Activated naive CD4-positive, alpha-beta T cell treated with anti-CD3 and anti-CD28 coated beads, Interleukin-2, amount 10 ng/mL, durations not matched to agents 7 days and 5 days (primary cell): ENCODE measurements at regions of chr11 and their contacts with region 1.

Region 1: DNA sequence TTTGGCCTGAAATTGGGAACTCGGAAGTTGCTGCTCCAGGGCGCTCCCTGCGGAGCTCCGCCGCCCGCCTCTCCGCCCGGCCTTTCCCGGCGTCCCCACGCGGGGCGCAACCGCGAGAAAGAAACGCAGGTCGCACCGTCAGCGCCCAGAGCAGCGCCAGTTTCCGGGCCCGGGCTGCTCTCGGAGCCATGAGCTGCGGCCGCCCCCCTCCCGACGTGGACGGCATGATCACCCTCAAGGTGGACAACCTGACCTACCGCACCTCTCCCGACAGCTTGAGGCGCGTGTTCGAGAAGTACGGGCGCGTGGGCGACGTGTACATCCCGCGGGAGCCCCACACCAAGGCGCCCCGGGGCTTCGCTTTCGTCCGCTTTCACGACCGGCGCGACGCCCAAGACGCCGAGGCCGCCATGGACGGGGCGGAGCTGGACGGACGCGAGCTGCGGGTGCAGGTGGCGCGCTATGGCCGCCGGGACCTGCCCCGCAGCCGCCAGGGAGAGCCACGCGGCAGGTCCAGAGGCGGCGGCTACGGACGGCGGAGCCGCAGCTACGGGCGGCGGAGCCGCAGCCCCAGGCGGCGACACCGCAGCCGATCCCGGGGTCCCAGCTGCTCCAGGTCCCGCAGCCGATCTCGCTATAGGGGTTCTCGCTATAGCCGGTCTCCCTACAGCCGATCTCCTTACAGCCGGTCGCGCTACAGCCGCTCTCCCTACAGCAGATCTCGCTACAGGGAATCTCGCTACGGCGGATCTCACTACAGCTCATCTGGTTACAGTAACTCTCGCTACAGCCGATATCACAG is 521 bp downstream of the SRSF8 start:
- DNase-seq: peak; percentile 83
- H3K4me3 Mint-ChIP-seq: peak overlapping the region; percentile 89
- H3K27ac Mint-ChIP-seq: peak overlapping the region; percentile 97
- H3K4me1 Mint-ChIP-seq: peaks cover 24% of the 10 kb centered on the region
- H3K27me3 Mint-ChIP-seq: peaks cover 6% of the 10 kb centered on the region

Region 2: DNA sequence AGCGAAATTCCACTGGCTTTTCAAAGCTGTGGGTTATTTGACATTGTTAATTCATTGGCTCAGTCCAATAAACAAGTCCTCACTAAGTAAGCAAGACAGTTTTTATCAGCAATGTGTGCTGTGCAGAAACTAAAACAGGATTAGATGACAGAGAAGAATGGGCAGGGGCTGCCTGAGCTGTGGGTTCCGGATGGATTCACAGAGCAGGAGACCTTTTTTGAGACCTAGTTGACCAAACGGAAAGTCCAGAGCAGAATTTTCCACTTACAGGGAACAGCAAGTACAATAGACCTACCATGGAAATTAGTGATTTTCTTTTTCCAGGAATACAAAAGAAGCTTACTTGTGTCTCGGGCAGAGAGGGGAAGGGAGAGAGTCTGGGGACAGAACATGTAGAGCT is 23.2 kb before region 1 on chr11:
- CTCF ChIA-PET with region 1: no interaction called
- DNase-seq: no peak
- H3K4me3 Mint-ChIP-seq: no peak overlapping the region
- H3K27ac Mint-ChIP-seq: no peak overlapping the region
- H3K4me1 Mint-ChIP-seq: no peaks in the 10 kb centered on the region
- H3K27me3 Mint-ChIP-seq: peaks cover 39% of the 10 kb centered on the region

Region 3: GRCh38 chr11:95084509-95084908 is 17.3 kb after region 1 on chr11:
- CTCF ChIA-PET with region 1: interaction called, 143 read pairs
- DNase-seq: no peak
- H3K4me3 Mint-ChIP-seq: no peak overlapping the region
- H3K27ac Mint-ChIP-seq: no peak overlapping the region
- H3K4me1 Mint-ChIP-seq: peaks cover 21% of the 10 kb centered on the region
- H3K27me3 Mint-ChIP-seq: no peaks in the 10 kb centered on the region

Region 4: GRCh38 chr11:95089620-95090542 is 22.6 kb after region 1 on chr11 and contains the start of gene ENDOD1:
- CTCF ChIA-PET with region 1: interaction called, 143 read pairs
- DNase-seq: peak; percentile 89
- H3K4me3 Mint-ChIP-seq: peak within 1 kb of the TSS; percentile 86
- H3K27ac Mint-ChIP-seq: peak within 1 kb of the TSS; percentile 98
- H3K4me1 Mint-ChIP-seq: peaks cover 56% of the 10 kb centered on the region
- H3K27me3 Mint-ChIP-seq: no peaks in the 10 kb centered on the region

Region 5: GRCh38 chr11:95138448-95138847 is 71.2 kb after region 1 on chr11:
- CTCF ChIA-PET with region 1: interaction called, 87 read pairs
- DNase-seq: no peak
- H3K4me3 Mint-ChIP-seq: no peak overlapping the region
- H3K27ac Mint-ChIP-seq: no peak overlapping the region
- H3K4me1 Mint-ChIP-seq: peaks cover 6% of the 10 kb centered on the region
- H3K27me3 Mint-ChIP-seq: peaks cover 23% of the 10 kb centered on the region